Caco-2 (cell line): ENCODE measurements at regions of chr7 and their contacts with region 1.

Region 1: GRCh38 chr7:105759670-105760550 is 116.5 kb downstream of the ATXN7L1 start:
- DNase-seq: peak; percentile 50 to 56
- H3K4me3 ChIP-seq: no peak overlapping the region
- H3K4me3 Mint-ChIP-seq: no peak overlapping the region
- H3K27ac Mint-ChIP-seq: no peak overlapping the region
- H3K4me1 ChIP-seq: no peaks in the 10 kb centered on the region
- H3K4me1 Mint-ChIP-seq: no peaks in the 10 kb centered on the region
- H3K27me3 ChIP-seq: no peaks in the 10 kb centered on the region
- H3K27me3 Mint-ChIP-seq: no peaks in the 10 kb centered on the region
- CTCF ChIP-seq: peak in 1 of 2 experiments; percentile 53

Region 2: GRCh38 chr7:104552102-104552501 is 1207.8 kb before region 1 on chr7:
- CTCF ChIA-PET with region 1: no interaction called
- POLR2A ChIA-PET with region 1: no interaction called
- intact Hi-C with region 1: no loop called
- DNase-seq: peak; percentile 53 to 65
- H3K4me3 ChIP-seq: no peak overlapping the region
- H3K4me3 Mint-ChIP-seq: no peak overlapping the region
- H3K27ac Mint-ChIP-seq: no peak overlapping the region
- H3K4me1 ChIP-seq: no peaks in the 10 kb centered on the region
- H3K4me1 Mint-ChIP-seq: no peaks in the 10 kb centered on the region
- H3K27me3 ChIP-seq: no peaks in the 10 kb centered on the region
- H3K27me3 Mint-ChIP-seq: no peaks in the 10 kb centered on the region
- CTCF ChIP-seq: no peak

Region 3: GRCh38 chr7:105829681-105830322 is 69.9 kb after region 1 on chr7:
- CTCF ChIA-PET with region 1: no interaction called
- POLR2A ChIA-PET with region 1: no interaction called
- intact Hi-C with region 1: loop called (anchors 2 kb)
- DNase-seq: no peak
- H3K4me3 ChIP-seq: no peak overlapping the region
- H3K4me3 Mint-ChIP-seq: no peak overlapping the region
- H3K27ac Mint-ChIP-seq: no peak overlapping the region
- H3K4me1 ChIP-seq: peaks cover 32% of the 10 kb centered on the region
- H3K4me1 Mint-ChIP-seq: peaks cover 12% of the 10 kb centered on the region
- H3K27me3 ChIP-seq: no peaks in the 10 kb centered on the region
- H3K27me3 Mint-ChIP-seq: no peaks in the 10 kb centered on the region
- CTCF ChIP-seq: no peak

Region 4: GRCh38 chr7:105876091-105876963 is 116.4 kb after region 1 on chr7 and contains the start of gene ATXN7L1:
- CTCF ChIA-PET with region 1: interaction called, 6 read pairs
- POLR2A ChIA-PET with region 1: no interaction called
- intact Hi-C with region 1: loop called (anchors 1 kb)
- DNase-seq: peak; percentile 97
- H3K4me3 ChIP-seq: peak within 1 kb of the TSS; percentile 95
- H3K4me3 Mint-ChIP-seq: peak within 1 kb of the TSS; percentile 97
- H3K27ac Mint-ChIP-seq: peak within 1 kb of the TSS; percentile 99
- H3K4me1 ChIP-seq: peaks cover 9% of the 10 kb centered on the region; the same call in 1 of the 2 replicates
- H3K4me1 Mint-ChIP-seq: peaks cover 15% of the 10 kb centered on the region
- H3K27me3 ChIP-seq: no peaks in the 10 kb centered on the region
- H3K27me3 Mint-ChIP-seq: no peaks in the 10 kb centered on the region
- CTCF ChIP-seq: peak; percentile 9 to 63
- total RNA-seq, gene ATXN7L1: 14.1 and 18.2 TPM in 2 replicates

Region 5: DNA sequence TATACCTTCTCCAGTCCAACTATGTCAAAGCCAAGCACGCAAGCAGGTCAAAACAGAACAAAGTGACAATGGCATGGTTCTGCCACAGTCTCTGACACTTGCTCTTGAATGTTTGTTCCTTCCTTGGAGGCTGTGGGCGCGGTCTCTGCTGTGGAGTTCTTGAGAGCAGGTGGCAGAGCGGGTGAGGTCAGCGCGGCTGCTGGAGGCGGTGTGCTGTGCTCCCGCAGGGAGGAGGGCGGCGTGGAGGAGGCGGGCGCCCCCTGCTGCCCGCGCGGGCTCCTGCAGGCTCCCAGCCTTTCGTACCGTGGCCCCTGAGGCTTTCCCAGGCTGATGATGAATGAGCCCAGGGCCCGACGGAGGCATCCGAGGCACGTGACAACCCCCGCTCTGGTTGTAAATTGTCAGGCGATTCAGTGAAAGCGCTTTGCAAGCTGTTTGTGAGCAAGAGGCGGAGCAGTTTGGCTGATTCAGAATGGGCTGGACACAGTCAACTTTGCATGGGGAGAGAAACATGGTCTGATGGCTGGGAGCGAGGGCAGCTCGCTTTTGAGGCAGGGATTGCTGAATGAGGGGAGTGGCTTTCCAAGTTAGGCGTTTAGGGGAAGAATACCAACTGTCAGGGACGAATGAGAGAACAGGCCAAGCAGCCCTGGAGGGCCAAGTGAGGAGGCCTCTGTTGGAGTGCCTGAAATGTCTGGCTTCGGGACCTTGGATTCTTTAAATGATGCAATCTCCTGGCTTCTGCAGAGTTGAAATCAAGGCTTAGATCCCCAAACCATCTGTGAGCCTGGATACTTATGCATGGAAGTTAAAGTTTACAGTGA is 249.7 kb after region 1 on chr7:
- CTCF ChIA-PET with region 1: interaction called, 5 read pairs
- POLR2A ChIA-PET with region 1: no interaction called
- intact Hi-C with region 1: loop called (anchors 1 kb)
- DNase-seq: peak; percentile 85 to 87
- H3K4me3 ChIP-seq: no peak overlapping the region
- H3K4me3 Mint-ChIP-seq: peak overlapping the region; percentile 56
- H3K27ac Mint-ChIP-seq: peak overlapping the region; percentile 23
- H3K4me1 ChIP-seq: peaks cover 8% of the 10 kb centered on the region; the same call in 1 of the 2 replicates
- H3K4me1 Mint-ChIP-seq: peaks cover 19% of the 10 kb centered on the region
- H3K27me3 ChIP-seq: no peaks in the 10 kb centered on the region
- H3K27me3 Mint-ChIP-seq: peaks cover 3% of the 10 kb centered on the region
- CTCF ChIP-seq: peak; percentile 85 to 96

Region 6: GRCh38 chr7:106153891-106154449 is 394.1 kb after region 1 on chr7:
- CTCF ChIA-PET with region 1: no interaction called
- POLR2A ChIA-PET with region 1: no interaction called
- intact Hi-C with region 1: loop called (anchors 10 kb)
- DNase-seq: peak; percentile 79 to 85
- H3K4me3 ChIP-seq: no peak overlapping the region
- H3K4me3 Mint-ChIP-seq: no peak overlapping the region
- H3K27ac Mint-ChIP-seq: no peak overlapping the region
- H3K4me1 ChIP-seq: peaks cover 34% of the 10 kb centered on the region
- H3K4me1 Mint-ChIP-seq: peaks cover 13% of the 10 kb centered on the region
- H3K27me3 ChIP-seq: no peaks in the 10 kb centered on the region
- H3K27me3 Mint-ChIP-seq: peaks cover 14% of the 10 kb centered on the region
- CTCF ChIP-seq: peak; percentile 91 to 93